Activated T-helper 2 cell treated with anti-CD3 and anti-CD28 coated beads, Interferon-gamma antibody, Interleukin-2, Interleukin-4, amounts not matched to agents 10 μg/mL and 5 μg/mL and 100 μg/mL, durations not matched to agents 14 hours and 24 hours and 36 hours (primary cell): ENCODE measurements at regions of chr7 and their contacts with region 1.

Region 1: GRCh38 chr7:21086688-21087087 is 300.0 kb upstream of the SP8 start:
- DNase-seq: no peak
- H3K4me3 Mint-ChIP-seq: no peak overlapping the region
- H3K27ac Mint-ChIP-seq: no peak overlapping the region
- H3K4me1 Mint-ChIP-seq: no peaks in the 10 kb centered on the region
- H3K27me3 Mint-ChIP-seq: no peaks in the 10 kb centered on the region

Region 2: GRCh38 chr7:20822991-20823390 is 263.7 kb before region 1 on chr7:
- intact Hi-C with region 1: no loop called
- DNase-seq: no peak
- H3K4me3 Mint-ChIP-seq: no peak overlapping the region
- H3K27ac Mint-ChIP-seq: no peak overlapping the region
- H3K4me1 Mint-ChIP-seq: no peaks in the 10 kb centered on the region
- H3K27me3 Mint-ChIP-seq: no peaks in the 10 kb centered on the region

Region 3: GRCh38 chr7:20834656-20835055 is 252.0 kb before region 1 on chr7:
- intact Hi-C with region 1: no loop called
- DNase-seq: no peak
- H3K4me3 Mint-ChIP-seq: no peak overlapping the region
- H3K27ac Mint-ChIP-seq: no peak overlapping the region
- H3K4me1 Mint-ChIP-seq: no peaks in the 10 kb centered on the region
- H3K27me3 Mint-ChIP-seq: no peaks in the 10 kb centered on the region

Region 4: DNA sequence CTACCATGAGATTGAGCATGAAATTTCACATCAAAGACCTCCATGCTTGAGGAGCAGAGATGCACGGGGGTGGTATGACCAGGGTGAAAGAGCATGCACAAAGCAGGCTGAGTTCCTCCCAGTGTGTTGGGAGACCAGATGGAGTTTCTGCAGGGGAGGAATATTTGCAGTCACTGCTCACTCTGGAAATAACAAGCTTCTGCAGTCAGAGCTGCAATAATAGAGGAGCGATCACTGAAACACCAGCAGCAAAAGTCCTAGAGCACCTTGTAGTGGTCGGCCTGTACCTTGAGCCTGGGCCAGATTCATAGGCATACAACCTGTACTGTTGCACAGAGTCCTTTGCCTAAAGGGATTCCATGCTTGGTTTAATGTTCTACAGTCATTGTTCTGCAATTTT is 115.5 kb before region 1 on chr7:
- intact Hi-C with region 1: no loop called
- DNase-seq: no peak
- H3K4me3 Mint-ChIP-seq: no peak overlapping the region
- H3K27ac Mint-ChIP-seq: no peak overlapping the region
- H3K4me1 Mint-ChIP-seq: no peaks in the 10 kb centered on the region
- H3K27me3 Mint-ChIP-seq: no peaks in the 10 kb centered on the region

Region 5: GRCh38 chr7:22601812-22602565 is 1515.3 kb after region 1 on chr7:
- intact Hi-C with region 1: loop called (anchors 10 kb)
- DNase-seq: no peak
- H3K4me3 Mint-ChIP-seq: no peak overlapping the region
- H3K27ac Mint-ChIP-seq: no peak overlapping the region
- H3K4me1 Mint-ChIP-seq: no peaks in the 10 kb centered on the region
- H3K27me3 Mint-ChIP-seq: peaks cover 49% of the 10 kb centered on the region